HEK293 (cell line): ENCODE measurements at regions of chr19 and their contacts with region 1.

Region 1: DNA sequence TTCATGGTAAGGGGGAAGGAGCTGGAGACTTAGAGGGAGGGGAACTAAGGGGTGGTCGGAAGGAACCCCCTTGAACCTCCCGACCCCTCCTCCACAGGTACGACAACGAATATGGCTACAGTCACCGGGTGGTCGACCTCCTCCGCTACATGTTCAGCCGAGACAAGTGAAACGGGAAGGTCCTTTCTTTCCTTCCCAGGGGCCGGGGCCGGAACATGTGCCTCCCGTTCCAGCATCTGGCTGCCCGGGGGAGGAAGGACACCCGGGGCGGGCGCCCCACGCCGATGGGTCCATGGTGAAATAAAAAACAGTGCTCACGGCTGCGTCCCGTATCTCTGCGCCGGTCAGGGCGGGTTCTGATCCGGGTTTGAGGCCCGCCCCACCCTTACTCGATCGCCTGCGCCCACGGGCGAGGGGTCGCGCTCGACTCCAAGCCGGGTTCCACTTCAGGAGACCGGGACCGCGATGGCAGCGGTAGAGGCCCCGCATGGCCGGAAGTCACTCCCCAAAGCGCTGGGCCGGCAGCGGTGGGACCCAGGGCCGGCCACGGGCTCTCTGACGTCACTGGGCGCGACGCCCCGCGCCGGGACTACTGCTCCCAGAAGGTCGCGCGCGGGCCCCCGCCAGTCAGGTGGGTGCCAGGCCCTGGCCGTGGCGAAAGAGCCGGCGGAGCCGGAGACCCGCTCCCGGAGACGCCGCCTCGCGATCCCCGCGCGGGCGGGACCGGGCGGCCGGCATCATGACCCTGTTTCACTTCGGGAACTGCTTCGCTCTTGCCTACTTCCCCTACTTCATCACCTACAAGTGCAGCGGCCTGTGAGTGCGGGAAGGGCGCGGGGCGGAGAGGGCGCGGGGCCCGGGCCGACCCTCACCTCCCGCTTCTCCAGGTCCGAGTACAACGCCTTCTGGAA is at the start of gene TMEM147:
- H3K4me3 ChIP-seq: peak within 1 kb of the TSS; percentile 62
- H3K27ac ChIP-seq: peak within 1 kb of the TSS; percentile 94
- H3K4me1 ChIP-seq: peaks cover 16% of the 10 kb centered on the region
- CTCF ChIP-seq: no peak; the same call in none of the 2 replicates

Region 2: GRCh38 chr19:35495107-35496064 is 49.9 kb before region 1 on chr19:
- CTCF ChIA-PET with region 1: interaction called, 10 read pairs
- POLR2A ChIA-PET with region 1: interaction called, 3 read pairs
- H3K4me3 ChIP-seq: no peak overlapping the region
- H3K27ac ChIP-seq: no peak overlapping the region
- H3K4me1 ChIP-seq: no peaks in the 10 kb centered on the region
- CTCF ChIP-seq: peak; percentile 99

Region 3: GRCh38 chr19:35557539-35558399 is 12.5 kb after region 1 on chr19:
- CTCF ChIA-PET with region 1: interaction called, 53 read pairs
- POLR2A ChIA-PET with region 1: interaction called, 10 read pairs
- H3K4me3 ChIP-seq: peak overlapping the region; percentile 22
- H3K27ac ChIP-seq: no peak overlapping the region
- H3K4me1 ChIP-seq: peaks cover 10% of the 10 kb centered on the region
- CTCF ChIP-seq: no peak

Region 4: DNA sequence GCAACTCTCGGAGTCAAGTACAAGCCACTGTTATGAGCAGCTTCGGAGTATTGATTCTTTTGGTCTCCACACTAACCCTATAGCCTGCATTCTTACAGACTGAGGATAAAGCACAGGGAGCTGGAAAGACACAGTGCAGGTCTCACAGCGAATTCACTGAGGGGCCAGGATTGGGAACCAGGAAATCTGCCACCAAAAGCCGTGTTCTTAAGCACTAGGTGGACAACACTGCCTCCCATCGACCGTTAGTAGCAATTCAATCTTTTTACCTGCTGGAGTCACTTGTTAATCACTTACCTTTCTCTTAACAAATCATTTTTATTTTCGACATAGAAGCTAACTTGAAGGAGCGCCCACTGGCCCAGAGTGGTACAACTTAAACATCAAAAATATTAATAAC is 47.0 kb after region 1 on chr19:
- CTCF ChIA-PET with region 1: interaction called, 52 read pairs
- POLR2A ChIA-PET with region 1: no interaction called
- H3K4me3 ChIP-seq: no peak overlapping the region
- H3K27ac ChIP-seq: no peak overlapping the region
- H3K4me1 ChIP-seq: 0 out of 2 replicates have a peak, but pooled peaks cover 2% of the 10 kb centered on the region
- CTCF ChIP-seq: 0 out of 2 replicates have a peak, but pooled peaks have one; percentile 34

Region 5: GRCh38 chr19:35665157-35665556 is 119.9 kb after region 1 on chr19:
- CTCF ChIA-PET with region 1: interaction called, 11 read pairs
- POLR2A ChIA-PET with region 1: no interaction called
- H3K4me3 ChIP-seq: no peak overlapping the region
- H3K27ac ChIP-seq: no peak overlapping the region
- H3K4me1 ChIP-seq: no peaks in the 10 kb centered on the region
- CTCF ChIP-seq: no peak

Region 6: DNA sequence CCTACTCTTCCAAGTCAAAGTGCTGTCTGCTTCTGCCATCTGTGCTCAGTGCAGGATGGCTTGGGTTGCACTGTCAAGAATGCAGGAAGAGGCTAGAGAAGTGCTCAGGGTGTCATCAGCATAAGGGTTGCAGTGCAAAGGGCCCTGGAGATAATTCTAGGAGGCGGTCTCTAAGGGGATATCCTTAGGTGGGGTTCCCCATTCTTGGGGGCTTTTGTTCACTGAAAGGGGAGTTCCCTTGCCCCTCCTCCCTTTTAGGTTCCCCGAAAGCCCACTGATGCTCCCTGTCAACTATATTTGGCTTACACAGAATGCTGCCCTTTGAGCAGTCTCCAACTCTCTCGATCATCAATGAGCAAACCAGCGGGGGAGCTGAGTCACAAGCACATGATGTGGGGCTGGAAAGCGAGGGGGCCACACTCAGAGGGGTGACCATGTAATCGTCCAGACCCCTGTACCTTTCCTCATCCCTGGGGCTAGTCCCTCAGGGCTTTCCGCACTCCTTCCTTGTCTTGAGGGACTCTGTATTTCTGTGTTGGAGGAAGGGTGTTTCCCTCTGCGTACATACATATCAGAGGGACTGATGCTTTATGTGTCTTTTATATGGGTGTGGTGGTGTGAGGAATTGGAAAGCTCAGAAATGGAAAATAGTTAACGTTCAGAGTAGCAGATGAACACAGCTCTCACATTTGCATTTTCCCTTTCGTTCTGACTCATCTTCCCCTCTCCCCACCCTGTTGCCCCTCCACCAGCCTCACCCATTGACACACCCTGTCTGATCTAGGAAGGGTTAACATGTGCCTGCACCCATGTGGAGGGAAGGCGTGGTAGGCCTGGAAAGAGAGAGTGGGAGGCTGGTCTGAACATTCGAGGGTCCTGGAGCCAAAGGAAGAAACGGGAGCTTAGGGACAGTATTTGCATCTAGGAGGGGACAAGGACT is 165.8 kb after region 1 on chr19:
- CTCF ChIA-PET with region 1: interaction called, 17 read pairs
- POLR2A ChIA-PET with region 1: no interaction called
- H3K4me3 ChIP-seq: no peak overlapping the region
- H3K27ac ChIP-seq: 0 out of 2 replicates have a peak overlapping the region, but pooled peaks have one; percentile 20
- H3K4me1 ChIP-seq: peaks cover 7% of the 10 kb centered on the region
- CTCF ChIP-seq: no peak